Prostate gland (tissue), 2 donors: ENCODE measurements at regions of chr20 and their contacts with region 1.

Region 1: GRCh38 chr20:39049684-39050554 is 87.8 kb downstream of the DHX35 start:
- DNase-seq: peak; percentile 67
- H3K4me3 ChIP-seq: peak overlapping the region; percentile 43 to 56
- H3K27ac ChIP-seq: peak overlapping the region; percentile 2 to 46
- H3K4me1 ChIP-seq: no peaks in the 10 kb centered on the region
- H3K27me3 ChIP-seq: no peaks in the 10 kb centered on the region
- CTCF ChIP-seq: peak; percentile 92 to 97 (median 94)
- POLR2A ChIP-seq: no peak

Region 2: GRCh38 chr20:38543014-38543906 is 506.7 kb before region 1 on chr20:
- intact Hi-C with region 1: no loop called
- DNase-seq: no peak
- H3K4me3 ChIP-seq: no peak overlapping the region
- H3K27ac ChIP-seq: no peak overlapping the region
- H3K4me1 ChIP-seq: no peaks in the 10 kb centered on the region
- H3K27me3 ChIP-seq: no peaks in the 10 kb centered on the region
- CTCF ChIP-seq: no peak
- POLR2A ChIP-seq: no peak

Region 3: GRCh38 chr20:38926142-38926933 is 123.6 kb before region 1 on chr20 and contains the start of gene FAM83D:
- intact Hi-C with region 1: loop called (anchors 2 kb)
- DNase-seq: peak; percentile 89
- H3K4me3 ChIP-seq: peak within 1 kb of the TSS; percentile 48 to 49
- H3K27ac ChIP-seq: no peak within 1 kb of the TSS
- H3K4me1 ChIP-seq: peaks cover 8% of the 10 kb centered on the region
- H3K27me3 ChIP-seq: no peaks in the 10 kb centered on the region
- CTCF ChIP-seq: peak in 2 of 4 experiments; percentile 1 to 92
- POLR2A ChIP-seq: peak; percentile 87
- total RNA-seq, gene FAM83D: 10.2 to 12.6 TPM

Region 4: DNA sequence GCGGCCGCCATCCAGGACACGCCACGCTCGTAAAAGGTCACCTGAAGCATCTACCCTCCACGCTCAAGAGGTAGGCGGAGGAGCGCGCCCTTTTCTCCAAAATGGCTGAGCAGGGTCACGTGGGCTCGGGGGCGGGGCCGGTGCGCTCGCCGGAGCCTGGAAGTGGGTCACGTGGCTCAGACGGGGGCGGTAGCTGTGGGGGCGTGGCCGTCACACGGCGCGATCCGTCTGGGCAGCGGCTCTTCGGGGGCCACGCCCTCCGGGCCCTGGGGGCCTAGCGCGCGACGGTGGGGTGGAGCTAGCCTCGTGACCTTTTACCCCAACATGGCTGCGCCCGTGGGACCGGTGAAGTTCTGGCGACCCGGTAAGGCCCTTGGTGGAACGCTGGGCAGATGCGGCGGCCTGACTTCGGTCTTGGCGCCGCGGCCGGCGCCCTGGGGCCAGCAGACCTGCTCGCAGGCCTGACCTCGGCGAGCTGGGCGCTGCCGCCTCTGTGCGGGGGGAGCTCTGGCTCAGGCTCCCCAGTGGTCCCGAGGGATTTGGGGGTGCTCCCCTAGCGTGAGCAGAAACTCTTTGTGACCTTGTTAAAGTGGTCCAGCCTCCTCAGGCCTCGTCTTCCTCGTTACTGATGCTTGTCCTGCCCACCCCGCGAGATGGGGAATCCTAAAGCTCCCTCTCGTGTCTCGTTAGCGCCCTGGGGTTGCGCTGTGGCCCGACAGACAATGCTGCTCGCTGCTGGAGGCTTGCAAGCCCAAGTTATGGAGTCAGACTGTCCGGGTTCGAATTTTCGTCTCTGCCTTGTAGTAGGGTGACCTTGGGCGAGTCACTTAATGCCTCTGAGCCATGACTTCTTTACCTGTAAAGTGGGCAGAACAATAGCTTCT is 87.6 kb before region 1 on chr20 and contains the start of gene DHX35:
- intact Hi-C with region 1: loop called (anchors 5 kb)
- DNase-seq: peak; percentile 98
- H3K4me3 ChIP-seq: peak within 1 kb of the TSS; percentile 66 to 91
- H3K27ac ChIP-seq: peak within 1 kb of the TSS; percentile 79 to 86
- H3K4me1 ChIP-seq: peaks cover 5% of the 10 kb centered on the region
- H3K27me3 ChIP-seq: no peaks in the 10 kb centered on the region
- CTCF ChIP-seq: peak in 2 of 4 experiments; percentile 34 to 35
- POLR2A ChIP-seq: peak; percentile 48
- total RNA-seq, gene DHX35: 12.8 to 15.6 TPM

Region 5: GRCh38 chr20:39082622-39083398 is 32.9 kb after region 1 on chr20:
- intact Hi-C with region 1: loop called (anchors 1 kb)
- DNase-seq: no peak
- H3K4me3 ChIP-seq: no peak overlapping the region
- H3K27ac ChIP-seq: no peak overlapping the region
- H3K4me1 ChIP-seq: no peaks in the 10 kb centered on the region
- H3K27me3 ChIP-seq: no peaks in the 10 kb centered on the region
- CTCF ChIP-seq: no peak
- POLR2A ChIP-seq: no peak